HEK293 (cell line): ENCODE measurements at regions of chr15 and their contacts with region 1.

Region 1: GRCh38 chr15:92917606-92918407 is 17.7 kb downstream of the CHD2 start:
- H3K4me3 ChIP-seq: no peak overlapping the region; the same call in 1 of the 2 replicates
- H3K27ac ChIP-seq: peak overlapping the region; percentile 88
- H3K4me1 ChIP-seq: peaks cover 48% of the 10 kb centered on the region
- CTCF ChIP-seq: peak; percentile 76; the same call in 1 of the 2 replicates

Region 2: DNA sequence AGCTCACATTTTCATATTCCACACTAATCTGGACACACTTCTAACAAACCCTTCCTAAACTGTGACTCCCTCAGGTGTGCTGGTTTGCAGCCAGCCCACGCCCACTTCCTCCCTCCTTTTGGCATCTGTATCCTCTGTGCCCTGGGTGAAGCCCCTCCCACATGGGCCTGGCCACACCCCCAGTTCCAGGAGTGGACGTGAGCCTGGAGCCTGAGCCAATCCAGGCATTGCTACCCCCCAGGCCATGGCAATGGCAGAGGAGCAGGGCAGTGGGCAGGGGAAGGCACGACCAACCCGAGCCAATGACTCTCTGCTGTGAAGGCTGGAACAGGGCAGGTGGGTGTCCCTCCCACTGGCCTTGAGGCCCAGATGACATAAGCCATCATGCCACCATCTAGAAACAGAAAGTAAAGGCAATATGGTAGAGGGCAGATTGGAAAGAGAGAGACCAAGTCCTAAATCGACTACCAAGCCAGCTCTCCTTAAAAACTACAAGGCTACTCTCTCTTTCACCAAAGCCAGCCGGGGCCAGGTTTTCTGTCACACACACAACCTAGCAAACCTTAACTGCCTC is 280.8 kb before region 1 on chr15:
- CTCF ChIA-PET with region 1: no interaction called
- POLR2A ChIA-PET with region 1: no interaction called
- H3K4me3 ChIP-seq: no peak overlapping the region
- H3K27ac ChIP-seq: peak overlapping the region; percentile 74
- H3K4me1 ChIP-seq: peaks cover 19% of the 10 kb centered on the region
- CTCF ChIP-seq: no peak

Region 3: DNA sequence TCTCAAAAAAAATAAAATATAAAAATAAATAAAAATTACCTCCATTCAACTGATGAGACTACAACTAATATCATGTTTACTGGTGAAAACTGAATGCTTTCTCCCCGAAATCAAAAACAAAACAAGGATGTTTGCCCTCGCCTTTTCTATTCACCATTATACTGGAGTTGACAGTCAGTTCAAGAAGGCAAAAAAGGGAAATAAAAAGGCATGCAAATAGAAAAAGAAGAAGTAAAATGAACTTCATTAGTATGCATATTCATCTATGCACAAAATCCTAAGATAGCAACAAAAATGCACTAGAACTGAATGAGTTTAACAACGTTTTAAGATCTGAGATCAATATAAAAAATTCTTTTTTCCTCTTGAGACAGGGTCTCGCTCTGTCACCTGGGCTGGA is 189.5 kb before region 1 on chr15:
- CTCF ChIA-PET with region 1: no interaction called
- POLR2A ChIA-PET with region 1: no interaction called
- H3K4me3 ChIP-seq: no peak overlapping the region
- H3K27ac ChIP-seq: no peak overlapping the region
- H3K4me1 ChIP-seq: no peaks in the 10 kb centered on the region
- CTCF ChIP-seq: no peak

Region 4: GRCh38 chr15:92803847-92804609 is 113.8 kb before region 1 on chr15:
- CTCF ChIA-PET with region 1: interaction called, 46 read pairs
- POLR2A ChIA-PET with region 1: interaction called, 18 read pairs
- H3K4me3 ChIP-seq: no peak overlapping the region
- H3K27ac ChIP-seq: peak overlapping the region; percentile 78
- H3K4me1 ChIP-seq: peaks cover 8% of the 10 kb centered on the region; the same call in 1 of the 2 replicates
- CTCF ChIP-seq: no peak

Region 5: DNA sequence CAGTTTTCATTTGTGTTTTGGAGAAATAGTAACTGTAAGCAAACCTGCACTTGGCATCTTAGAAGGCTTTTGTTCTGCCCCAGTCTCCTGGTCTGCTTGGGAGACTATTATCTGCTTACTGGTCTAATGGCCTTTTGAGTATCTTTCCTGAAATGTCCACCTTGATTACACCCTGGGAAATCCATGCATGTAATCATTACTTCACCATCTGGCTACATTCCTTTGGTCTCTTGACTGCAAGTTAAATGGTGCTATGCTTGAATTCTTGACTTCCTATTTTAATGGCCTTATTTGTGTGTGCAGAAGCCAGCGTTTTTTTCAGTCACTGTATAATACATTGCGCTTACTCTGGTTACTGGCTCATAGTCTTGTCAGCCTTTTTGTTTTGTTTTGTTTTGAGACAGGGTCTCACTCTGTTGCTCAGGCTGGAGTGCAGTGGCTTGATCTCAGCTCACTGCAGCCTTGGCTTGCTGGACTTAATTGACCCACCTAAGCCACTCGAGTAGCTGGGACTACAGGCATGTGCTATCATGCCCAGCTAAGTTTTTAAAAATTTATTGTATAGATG is 12.3 kb after region 1 on chr15:
- CTCF ChIA-PET with region 1: interaction called, 30 read pairs
- POLR2A ChIA-PET with region 1: no interaction called
- H3K4me3 ChIP-seq: no peak overlapping the region
- H3K27ac ChIP-seq: no peak overlapping the region; the same call in 1 of the 2 replicates
- H3K4me1 ChIP-seq: no peaks in the 10 kb centered on the region
- CTCF ChIP-seq: no peak

Region 6: DNA sequence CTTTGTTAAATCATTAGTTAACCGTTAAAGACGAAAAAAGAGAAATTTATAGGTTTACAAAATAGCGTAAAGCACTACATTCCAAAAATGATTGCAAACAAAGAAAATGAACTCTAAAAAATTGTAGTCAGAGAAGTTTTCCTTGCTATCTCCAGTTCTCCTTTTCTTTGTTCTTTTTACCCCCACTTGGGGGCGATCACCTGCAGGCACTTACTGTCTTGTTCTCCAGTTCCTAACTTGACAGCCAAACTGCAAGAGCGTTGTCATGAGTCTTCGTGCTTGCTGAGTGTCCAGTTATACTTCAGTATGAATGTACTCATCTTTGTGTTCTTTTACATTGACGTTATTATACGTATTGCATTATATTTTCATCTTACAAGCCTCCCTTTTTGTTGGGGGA is 36.8 kb after region 1 on chr15:
- CTCF ChIA-PET with region 1: interaction called, 14 read pairs
- POLR2A ChIA-PET with region 1: no interaction called
- H3K4me3 ChIP-seq: no peak overlapping the region
- H3K27ac ChIP-seq: no peak overlapping the region
- H3K4me1 ChIP-seq: no peaks in the 10 kb centered on the region
- CTCF ChIP-seq: no peak

Region 7: DNA sequence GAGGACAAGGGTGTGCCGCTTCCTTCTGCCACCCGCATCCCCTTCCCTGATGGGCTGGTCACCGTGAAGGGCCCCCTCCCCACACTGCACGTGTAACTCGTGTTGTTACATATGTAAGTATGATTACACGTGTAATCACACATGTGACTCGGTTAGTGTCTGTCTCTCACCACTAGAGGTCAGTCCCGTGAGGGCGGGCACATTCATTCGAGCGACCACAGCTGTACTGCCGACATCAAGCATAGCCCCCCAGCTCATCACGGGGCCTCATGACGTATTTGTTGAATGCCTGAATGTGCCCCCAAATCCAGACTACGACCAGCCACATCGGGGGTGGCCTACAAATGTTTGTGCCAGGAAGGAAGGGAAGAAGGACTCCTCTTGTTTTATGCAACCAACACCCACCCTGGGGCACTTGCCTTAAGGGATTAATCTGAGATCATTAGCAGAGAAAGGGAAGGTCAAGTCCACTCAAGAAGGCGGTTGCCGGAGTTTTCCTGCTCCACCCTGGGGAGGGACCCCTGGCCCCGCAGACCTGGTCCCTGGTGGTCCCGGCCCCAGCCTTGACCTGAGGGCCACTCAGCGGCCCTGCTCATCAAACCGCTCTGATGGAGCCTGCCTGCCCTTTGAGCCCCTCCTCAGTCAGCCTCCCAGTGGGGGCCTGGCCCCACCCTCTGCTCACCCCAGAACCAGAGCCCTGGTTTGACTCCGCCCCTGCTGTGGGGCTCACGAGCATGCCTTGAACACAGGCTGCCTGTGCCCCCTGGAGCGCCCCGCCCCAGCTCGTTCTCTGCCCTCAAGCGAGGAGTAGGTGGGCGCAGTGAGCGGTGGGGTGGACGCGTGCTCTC is 118.4 kb after region 1 on chr15:
- CTCF ChIA-PET with region 1: no interaction called
- POLR2A ChIA-PET with region 1: no interaction called
- H3K4me3 ChIP-seq: no peak overlapping the region
- H3K27ac ChIP-seq: no peak overlapping the region
- H3K4me1 ChIP-seq: no peaks in the 10 kb centered on the region
- CTCF ChIP-seq: peak; percentile 87